ENCODE measurements at regions of chr20 and their contacts with region 1.

Region 1: GRCh38 chr20:53578492-53579222 is 15.0 kb downstream of the ZNF217 start:
- DNase-seq: peak in 13 of 14 experiments; percentile 18 to 94 (median 44)
- ATAC-seq: peak; percentile 50
- H3K4me3 ChIP-seq: peak overlapping the region; percentile 57
- H3K4me3 Mint-ChIP-seq: peak overlapping the region; percentile 90
- H3K27ac ChIP-seq: peak overlapping the region; percentile 10 to 68
- H3K27ac Mint-ChIP-seq: peak overlapping the region; percentile 100
- H3K4me1 ChIP-seq: peaks cover 79% of the 10 kb centered on the region
- H3K4me1 Mint-ChIP-seq: peaks cover 96% of the 10 kb centered on the region
- H3K27me3 ChIP-seq: no peaks in the 10 kb centered on the region
- H3K27me3 Mint-ChIP-seq: no peaks in the 10 kb centered on the region
- CTCF ChIP-seq: peak; percentile 95

Region 2: GRCh38 chr20:53413186-53413631 is 165.4 kb before region 1 on chr20:
- CTCF ChIA-PET with region 1: no interaction called
- POLR2A ChIA-PET with region 1: no interaction called
- intact Hi-C with region 1: no loop called
- DNase-seq: peak; percentile 12 to 70 (median 34)
- ATAC-seq: peak; percentile 24
- H3K4me3 ChIP-seq: no peak overlapping the region
- H3K4me3 Mint-ChIP-seq: no peak overlapping the region
- H3K27ac ChIP-seq: no peak overlapping the region
- H3K27ac Mint-ChIP-seq: no peak overlapping the region
- H3K4me1 ChIP-seq: peaks cover 7% of the 10 kb centered on the region
- H3K4me1 Mint-ChIP-seq: peaks cover 11% of the 10 kb centered on the region
- H3K27me3 ChIP-seq: no peaks in the 10 kb centered on the region
- H3K27me3 Mint-ChIP-seq: no peaks in the 10 kb centered on the region
- CTCF ChIP-seq: peak; percentile 53

Region 3: DNA sequence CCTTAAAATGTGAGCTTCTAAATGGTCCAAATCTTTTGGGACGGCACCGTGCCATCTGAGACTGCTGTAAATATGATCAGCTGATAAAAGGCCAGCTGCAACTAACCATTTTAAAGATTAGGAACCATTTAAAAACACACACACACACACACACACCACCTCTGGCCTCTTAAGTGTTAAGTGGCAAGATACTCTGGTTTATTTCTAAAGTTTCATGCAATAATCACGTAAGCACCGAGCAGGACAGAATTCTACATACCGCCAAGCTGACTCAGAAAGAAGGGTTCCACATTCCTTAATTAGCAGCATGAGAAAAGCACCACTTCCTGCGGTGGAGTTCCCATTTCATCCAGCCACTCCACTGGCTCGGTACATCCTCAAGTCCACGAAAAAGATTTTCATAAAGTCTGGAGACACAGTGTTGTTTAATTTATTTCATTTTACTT is 32.8 kb after region 1 on chr20:
- CTCF ChIA-PET with region 1: interaction called, 3 read pairs
- POLR2A ChIA-PET with region 1: interaction called, 17 read pairs
- intact Hi-C with region 1: no loop called
- DNase-seq: peak in 2 of 14 experiments; percentile 47 to 48
- ATAC-seq: no peak
- H3K4me3 ChIP-seq: no peak overlapping the region
- H3K4me3 Mint-ChIP-seq: no peak overlapping the region
- H3K27ac ChIP-seq: peak overlapping the region in 1 of 2 donors; percentile 9
- H3K27ac Mint-ChIP-seq: peak overlapping the region; percentile 77
- H3K4me1 ChIP-seq: peaks cover 26% of the 10 kb centered on the region
- H3K4me1 Mint-ChIP-seq: peaks cover 40% of the 10 kb centered on the region
- H3K27me3 ChIP-seq: no peaks in the 10 kb centered on the region
- H3K27me3 Mint-ChIP-seq: no peaks in the 10 kb centered on the region
- CTCF ChIP-seq: no peak

Region 4: DNA sequence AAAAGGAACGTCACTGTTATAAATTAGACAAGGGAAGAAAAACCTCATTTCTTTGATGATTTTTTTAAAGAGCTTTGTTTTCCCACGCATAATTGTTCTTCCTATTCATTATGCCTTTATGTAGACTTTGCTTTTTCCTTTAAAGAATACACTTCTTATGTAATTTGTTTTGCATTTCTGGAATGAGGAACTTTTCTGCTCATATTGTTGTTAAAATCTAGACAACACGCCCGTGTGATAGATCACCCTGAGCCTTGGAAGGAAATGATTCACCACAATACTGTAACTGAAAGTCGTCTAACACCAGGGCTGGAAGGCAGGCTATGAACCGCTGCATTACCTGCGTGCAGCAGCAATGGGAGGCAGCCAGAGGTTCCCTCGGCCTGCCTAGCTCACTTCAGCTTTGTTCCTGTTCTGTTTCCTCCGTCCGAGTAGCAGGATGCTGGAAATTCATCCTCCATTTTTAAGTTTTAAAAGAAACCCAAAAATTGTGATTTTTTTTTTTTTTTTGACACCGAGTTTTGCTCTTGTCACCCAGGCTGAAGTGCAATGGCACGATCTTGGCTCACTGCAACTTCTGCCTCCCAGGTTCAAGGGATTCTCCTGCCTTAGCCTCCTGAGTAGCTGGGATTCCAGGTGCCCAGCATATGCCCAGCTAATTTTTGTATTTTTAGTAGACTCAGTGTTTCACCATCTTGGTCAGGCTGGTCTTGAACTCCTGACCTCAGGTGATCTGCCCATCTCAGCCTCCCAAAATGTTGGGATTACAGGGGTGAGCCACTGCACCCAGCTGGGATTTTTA is 64.6 kb after region 1 on chr20:
- CTCF ChIA-PET with region 1: no interaction called
- POLR2A ChIA-PET with region 1: interaction called, 15 read pairs
- intact Hi-C with region 1: loop called in 1 of 2 experiments (anchors 2 kb)
- DNase-seq: peak; percentile 54 to 88 (median 68)
- ATAC-seq: peak; percentile 96
- H3K4me3 ChIP-seq: peak overlapping the region; percentile 18
- H3K4me3 Mint-ChIP-seq: peak overlapping the region; percentile 84
- H3K27ac ChIP-seq: peak overlapping the region; percentile 83 to 85
- H3K27ac Mint-ChIP-seq: peak overlapping the region; percentile 93
- H3K4me1 ChIP-seq: peaks cover 38% of the 10 kb centered on the region
- H3K4me1 Mint-ChIP-seq: peaks cover 53% of the 10 kb centered on the region
- H3K27me3 ChIP-seq: no peaks in the 10 kb centered on the region
- H3K27me3 Mint-ChIP-seq: no peaks in the 10 kb centered on the region
- CTCF ChIP-seq: no peak

Region 5: GRCh38 chr20:53708129-53708968 is 129.7 kb after region 1 on chr20:
- CTCF ChIA-PET with region 1: interaction called, 3 read pairs
- POLR2A ChIA-PET with region 1: interaction called, 3 read pairs
- intact Hi-C with region 1: loop called in 1 of 2 experiments (anchors 2 kb)
- DNase-seq: peak in 6 of 14 experiments; percentile 2 to 51 (median 26)
- ATAC-seq: peak; percentile 38
- H3K4me3 ChIP-seq: no peak overlapping the region
- H3K4me3 Mint-ChIP-seq: peak overlapping the region; percentile 69
- H3K27ac ChIP-seq: peak overlapping the region; percentile 52 to 57
- H3K27ac Mint-ChIP-seq: peak overlapping the region; percentile 92
- H3K4me1 ChIP-seq: peaks cover 45% of the 10 kb centered on the region
- H3K4me1 Mint-ChIP-seq: peaks cover 47% of the 10 kb centered on the region
- H3K27me3 ChIP-seq: no peaks in the 10 kb centered on the region
- H3K27me3 Mint-ChIP-seq: no peaks in the 10 kb centered on the region
- CTCF ChIP-seq: no peak

Region 6: DNA sequence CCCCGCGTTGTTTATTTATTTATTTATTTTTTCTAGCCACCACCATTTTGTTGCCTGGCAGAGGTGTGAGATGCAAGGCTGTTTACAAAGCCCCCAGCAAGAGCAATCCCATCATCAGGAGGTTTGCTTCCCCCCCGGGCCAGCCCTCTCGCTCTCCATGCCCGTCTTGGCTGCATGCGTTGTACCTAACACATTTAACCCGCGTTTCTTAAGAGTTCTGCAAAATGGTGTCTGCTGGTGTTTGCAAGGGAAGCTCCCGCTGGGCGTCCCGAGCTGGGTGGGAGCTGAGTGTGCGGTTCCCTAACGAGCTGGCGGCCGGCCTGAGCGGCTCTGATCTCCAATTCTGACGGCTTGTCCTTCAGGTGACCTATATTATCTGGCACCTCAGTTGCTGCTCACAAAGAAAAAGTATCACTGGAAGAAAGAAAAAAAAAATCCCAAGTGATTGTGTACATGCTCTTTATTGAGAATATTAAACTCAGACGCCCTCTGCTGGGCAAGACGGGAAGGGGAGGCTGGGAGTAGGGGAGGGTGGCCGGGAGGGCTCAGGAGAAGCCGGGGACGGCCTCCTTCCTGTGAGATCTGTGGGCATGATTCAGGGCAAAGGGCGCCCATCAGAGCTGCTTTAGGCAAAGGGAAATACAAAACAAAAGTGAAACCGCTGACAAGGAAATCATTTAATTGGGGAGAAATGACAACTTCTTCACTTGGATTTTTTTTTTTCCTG is 337.0 kb after region 1 on chr20:
- CTCF ChIA-PET with region 1: interaction called, 11 read pairs
- POLR2A ChIA-PET with region 1: interaction called, 16 read pairs
- intact Hi-C with region 1: loop called (anchors 1 kb)
- DNase-seq: peak; percentile 88 to 99 (median 94)
- ATAC-seq: peak; percentile 94
- H3K4me3 ChIP-seq: peak overlapping the region; percentile 68
- H3K4me3 Mint-ChIP-seq: peak overlapping the region; percentile 88
- H3K27ac ChIP-seq: peak overlapping the region in 1 of 2 donors; percentile 54
- H3K27ac Mint-ChIP-seq: peak overlapping the region; percentile 69
- H3K4me1 ChIP-seq: peaks cover 24% of the 10 kb centered on the region
- H3K4me1 Mint-ChIP-seq: peaks cover 21% of the 10 kb centered on the region
- H3K27me3 ChIP-seq: no peaks in the 10 kb centered on the region
- H3K27me3 Mint-ChIP-seq: no peaks in the 10 kb centered on the region
- CTCF ChIP-seq: peak; percentile 86

Region 7: GRCh38 chr20:53949319-53949889 is 370.7 kb after region 1 on chr20:
- CTCF ChIA-PET with region 1: no interaction called
- POLR2A ChIA-PET with region 1: no interaction called
- intact Hi-C with region 1: loop called in 1 of 2 experiments (anchors 2 kb)
- DNase-seq: peak; percentile 59 to 92 (median 74)
- ATAC-seq: peak; percentile 92
- H3K4me3 ChIP-seq: peak overlapping the region; percentile 12
- H3K4me3 Mint-ChIP-seq: peak overlapping the region; percentile 83
- H3K27ac ChIP-seq: peak overlapping the region; percentile 63 to 83
- H3K27ac Mint-ChIP-seq: peak overlapping the region; percentile 99
- H3K4me1 ChIP-seq: peaks cover 31% of the 10 kb centered on the region
- H3K4me1 Mint-ChIP-seq: peaks cover 36% of the 10 kb centered on the region
- H3K27me3 ChIP-seq: no peaks in the 10 kb centered on the region
- H3K27me3 Mint-ChIP-seq: no peaks in the 10 kb centered on the region
- CTCF ChIP-seq: no peak

Region 8: DNA sequence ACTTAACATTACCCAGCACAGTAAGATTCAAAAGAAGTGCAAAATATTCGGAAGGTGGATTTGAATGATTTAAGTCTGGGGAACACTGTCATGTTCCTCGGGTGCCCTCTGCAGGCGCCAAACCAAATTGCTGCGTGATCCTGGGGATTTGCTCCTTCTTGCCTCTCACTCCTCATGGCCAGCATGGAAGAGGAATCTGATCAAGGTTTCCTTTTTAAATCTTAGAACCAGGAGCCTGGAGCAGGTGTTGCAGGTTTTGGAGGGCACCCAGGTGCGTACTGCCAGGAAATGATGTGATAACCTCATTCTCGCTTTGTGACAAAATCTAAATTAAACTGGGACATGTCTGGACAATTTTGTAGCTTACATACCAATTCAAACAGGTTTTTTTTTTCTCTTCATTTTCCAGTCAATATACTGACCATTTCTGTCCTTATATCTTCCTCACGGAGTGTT is 621.1 kb after region 1 on chr20:
- CTCF ChIA-PET with region 1: no interaction called
- POLR2A ChIA-PET with region 1: no interaction called
- intact Hi-C with region 1: loop called (anchors 2 to 10 kb)
- DNase-seq: peak; percentile 35 to 79 (median 60)
- ATAC-seq: peak; percentile 71
- H3K4me3 ChIP-seq: no peak overlapping the region
- H3K4me3 Mint-ChIP-seq: no peak overlapping the region
- H3K27ac ChIP-seq: no peak overlapping the region
- H3K27ac Mint-ChIP-seq: no peak overlapping the region
- H3K4me1 ChIP-seq: no peaks in the 10 kb centered on the region
- H3K4me1 Mint-ChIP-seq: no peaks in the 10 kb centered on the region
- H3K27me3 ChIP-seq: no peaks in the 10 kb centered on the region
- H3K27me3 Mint-ChIP-seq: no peaks in the 10 kb centered on the region
- CTCF ChIP-seq: peak; percentile 90

Measured in CD4-positive, alpha-beta T cell (primary cell).